Prostate gland (tissue), 2 donors: ENCODE measurements at regions of chr14 and their contacts with region 1.

Region 1: DNA sequence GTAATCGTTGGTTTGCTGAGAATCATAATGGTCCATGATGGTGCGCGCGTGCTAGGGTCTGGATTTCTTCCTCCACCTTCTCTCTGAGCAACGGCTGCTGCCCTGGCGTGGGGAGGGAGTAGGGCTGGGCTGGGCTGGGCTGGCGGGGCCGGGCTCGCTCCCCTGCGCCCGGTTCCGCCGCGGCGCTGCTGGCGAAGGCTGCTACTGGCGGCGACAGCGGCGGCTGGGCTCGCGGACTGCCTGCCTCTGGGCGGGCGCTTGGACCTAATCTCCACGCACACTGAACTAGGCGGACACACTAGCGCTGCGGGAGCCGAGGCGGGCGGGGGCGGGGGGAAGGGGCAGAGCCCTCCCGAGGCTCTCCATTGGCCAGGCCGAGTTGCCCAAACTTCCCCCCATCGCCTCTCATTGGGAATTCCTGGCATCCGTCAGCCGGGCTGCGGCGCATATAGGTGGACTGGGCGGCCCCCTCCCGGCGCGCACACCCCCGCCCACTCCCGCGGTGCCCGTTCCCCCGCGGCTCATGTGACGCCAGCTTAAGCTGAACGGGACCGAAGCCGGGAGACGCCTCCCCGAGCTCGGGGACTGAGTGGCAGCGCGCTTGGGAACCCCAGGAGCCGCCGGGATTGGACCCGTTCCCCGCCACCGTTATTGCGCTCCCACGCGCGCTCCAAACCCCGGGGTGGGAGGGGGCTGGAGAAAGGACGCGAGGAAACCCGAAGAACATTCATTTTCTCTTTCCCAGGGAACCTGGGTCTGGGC is at the start of gene ACTN1:
- DNase-seq: peak; percentile 97
- H3K4me3 ChIP-seq: peak within 1 kb of the TSS; percentile 97 to 99
- H3K27ac ChIP-seq: peak within 1 kb of the TSS; percentile 99
- H3K4me1 ChIP-seq: peaks cover 6% of the 10 kb centered on the region
- H3K27me3 ChIP-seq: no peaks in the 10 kb centered on the region
- CTCF ChIP-seq: peak in 2 of 4 experiments; percentile 1 to 36
- POLR2A ChIP-seq: peak; percentile 81
- total RNA-seq, gene ACTN1: 197 to 240 TPM

Region 2: DNA sequence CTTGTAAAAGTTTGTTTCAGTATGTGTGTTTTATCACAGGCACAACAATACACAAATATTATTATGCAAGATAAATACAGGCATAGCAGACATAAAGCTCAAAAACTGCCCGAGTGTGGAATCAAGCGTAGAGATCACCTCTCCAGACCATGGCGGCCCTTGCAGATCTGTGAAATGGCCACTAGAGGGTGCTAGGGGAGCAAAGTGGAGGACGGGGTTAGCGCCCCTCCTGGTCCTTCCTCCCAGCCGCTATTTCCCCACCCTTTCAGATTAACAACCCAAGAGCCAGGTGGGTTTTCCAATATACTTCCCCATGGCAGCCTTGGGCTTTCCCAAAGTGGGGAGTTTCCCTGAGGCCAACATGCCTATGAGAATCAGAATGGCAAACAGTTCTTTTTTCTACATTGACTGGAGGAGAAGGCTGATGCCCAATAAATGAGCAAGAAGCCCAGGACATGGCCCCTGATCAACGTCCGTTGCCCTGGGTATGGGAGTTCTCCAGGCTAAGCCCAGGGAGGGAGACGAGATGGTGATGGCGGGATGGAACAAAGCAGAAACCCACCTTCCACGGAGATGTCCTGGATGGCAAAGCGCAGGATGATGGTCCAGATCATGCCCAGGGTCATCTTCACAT is 67.5 kb before region 1 on chr14:
- intact Hi-C with region 1: loop called (anchors 5 kb)
- DNase-seq: peak; percentile 66
- H3K4me3 ChIP-seq: no peak overlapping the region
- H3K27ac ChIP-seq: peak overlapping the region; percentile 33
- H3K4me1 ChIP-seq: no peaks in the 10 kb centered on the region
- H3K27me3 ChIP-seq: no peaks in the 10 kb centered on the region
- CTCF ChIP-seq: peak; percentile 90 to 97 (median 95)
- POLR2A ChIP-seq: no peak

Region 3: DNA sequence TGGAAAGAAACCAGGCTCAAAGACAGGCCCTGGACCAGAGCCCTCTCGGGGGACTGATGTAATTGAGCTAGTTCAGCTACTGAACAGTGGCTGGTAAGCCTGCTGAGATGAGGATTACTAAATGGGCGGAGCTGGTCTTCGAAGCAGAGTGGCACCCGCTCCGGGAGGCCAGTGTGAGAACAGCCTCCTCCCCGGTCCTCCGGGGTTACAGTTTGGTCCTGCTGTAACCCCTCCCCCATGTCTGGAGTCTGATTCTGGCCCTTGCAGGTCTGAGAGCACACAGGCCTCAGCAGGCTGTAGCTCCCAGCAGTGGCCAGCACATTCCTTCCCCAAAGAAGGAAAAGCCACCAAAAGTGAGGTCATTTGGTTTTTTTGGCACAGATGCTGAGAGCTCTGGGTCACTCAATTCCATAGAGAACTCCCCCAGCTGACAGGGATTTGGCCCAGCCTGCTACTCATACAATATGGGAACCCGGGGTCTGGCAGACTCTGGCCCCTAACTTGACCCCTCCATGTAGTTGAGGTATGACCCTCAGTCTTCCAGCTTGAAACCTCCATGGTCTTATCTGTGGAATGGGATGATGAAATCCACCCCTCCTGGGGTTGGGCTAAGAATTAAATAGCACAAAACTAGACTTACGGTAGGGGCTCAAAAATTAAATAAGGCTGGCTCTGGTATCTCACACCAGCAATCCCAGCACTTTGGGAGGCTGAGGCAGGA is 39.1 kb before region 1 on chr14:
- intact Hi-C with region 1: loop called (anchors 5 kb)
- DNase-seq: peak; percentile 55
- H3K4me3 ChIP-seq: no peak overlapping the region
- H3K27ac ChIP-seq: peak overlapping the region; percentile 96 to 98
- H3K4me1 ChIP-seq: peaks cover 33% of the 10 kb centered on the region
- H3K27me3 ChIP-seq: no peaks in the 10 kb centered on the region
- CTCF ChIP-seq: no peak
- POLR2A ChIP-seq: peak; percentile 14

Region 4: DNA sequence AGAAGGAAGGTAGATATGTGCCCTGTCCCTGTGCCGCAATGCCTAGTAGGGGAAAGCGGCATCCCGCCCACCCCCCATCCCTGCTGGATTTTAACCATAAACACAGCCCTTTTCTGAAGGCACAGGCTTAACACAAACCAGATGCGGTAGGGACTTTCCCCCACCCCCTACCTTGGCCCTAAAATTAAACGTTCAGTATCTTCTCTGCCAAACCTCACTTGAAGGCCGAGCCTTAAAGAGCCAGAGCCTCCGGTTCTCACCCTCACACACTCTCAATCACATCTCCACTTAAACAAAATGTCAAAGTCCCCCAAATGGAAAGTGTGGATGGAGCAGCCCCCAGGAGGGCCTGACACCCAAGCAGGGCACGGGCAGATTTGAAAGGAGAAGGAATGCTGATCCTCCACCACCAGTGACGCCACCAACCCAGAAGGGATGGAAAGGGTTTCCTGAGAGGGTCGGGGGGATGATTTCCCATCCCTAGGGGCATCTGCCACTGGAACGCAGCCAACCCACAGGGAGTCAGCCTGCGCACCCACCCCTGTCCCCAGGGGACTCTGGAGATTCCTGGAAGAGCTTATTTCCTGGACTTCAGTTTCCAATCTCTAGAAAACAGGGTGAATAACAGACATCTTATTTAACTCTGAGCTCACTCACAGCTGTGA is 26.5 kb before region 1 on chr14:
- intact Hi-C with region 1: loop called (anchors 2 kb)
- DNase-seq: no peak
- H3K4me3 ChIP-seq: peak overlapping the region in 1 of 2 donors; percentile 5
- H3K27ac ChIP-seq: peak overlapping the region; percentile 79 to 98
- H3K4me1 ChIP-seq: peaks cover 9% of the 10 kb centered on the region
- H3K27me3 ChIP-seq: no peaks in the 10 kb centered on the region
- CTCF ChIP-seq: no peak
- POLR2A ChIP-seq: no peak

Region 5: DNA sequence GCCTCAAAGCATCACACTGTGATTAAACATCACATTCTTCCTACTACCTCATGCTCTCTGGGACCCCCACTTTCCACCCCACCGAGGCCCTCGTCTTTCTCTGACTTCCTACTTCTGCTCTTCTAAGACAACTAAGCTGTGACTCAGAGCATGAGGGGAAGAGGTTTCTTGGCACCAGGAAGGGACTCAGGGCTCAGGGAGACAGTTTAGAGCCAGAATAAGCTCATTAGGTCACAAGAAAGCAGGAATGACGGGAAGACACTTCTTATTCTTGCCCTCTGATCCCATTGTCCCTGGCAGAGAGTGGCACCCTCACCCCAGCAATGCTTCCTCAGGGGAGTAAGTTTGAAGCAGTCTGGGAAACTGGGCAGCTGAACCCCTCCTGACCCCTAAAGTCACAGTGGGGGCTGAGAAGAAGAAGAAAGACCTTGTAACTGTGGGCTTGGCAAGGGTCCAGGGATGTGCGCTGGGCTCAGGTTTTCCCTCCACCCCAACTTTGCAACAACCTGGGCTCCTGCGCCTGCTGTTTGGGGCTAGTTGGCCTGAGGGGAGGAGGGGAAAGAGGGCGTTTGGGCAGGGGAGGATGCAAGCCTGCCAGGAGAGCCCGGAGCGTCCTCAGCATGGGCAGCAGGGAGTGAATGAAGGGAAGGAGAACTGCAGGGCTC is 64.5 kb after region 1 on chr14:
- intact Hi-C with region 1: loop called (anchors 5 kb)
- DNase-seq: no peak
- H3K4me3 ChIP-seq: no peak overlapping the region
- H3K27ac ChIP-seq: peak overlapping the region; percentile 18 to 38
- H3K4me1 ChIP-seq: no peaks in the 10 kb centered on the region
- H3K27me3 ChIP-seq: no peaks in the 10 kb centered on the region
- CTCF ChIP-seq: no peak
- POLR2A ChIP-seq: no peak

Region 6: GRCh38 chr14:69055999-69056788 is 77.0 kb after region 1 on chr14:
- intact Hi-C with region 1: loop called (anchors 5 kb)
- DNase-seq: no peak
- H3K4me3 ChIP-seq: no peak overlapping the region
- H3K27ac ChIP-seq: no peak overlapping the region
- H3K4me1 ChIP-seq: no peaks in the 10 kb centered on the region
- H3K27me3 ChIP-seq: no peaks in the 10 kb centered on the region
- CTCF ChIP-seq: peak in 1 of 4 experiments; percentile 23
- POLR2A ChIP-seq: no peak

Region 7: DNA sequence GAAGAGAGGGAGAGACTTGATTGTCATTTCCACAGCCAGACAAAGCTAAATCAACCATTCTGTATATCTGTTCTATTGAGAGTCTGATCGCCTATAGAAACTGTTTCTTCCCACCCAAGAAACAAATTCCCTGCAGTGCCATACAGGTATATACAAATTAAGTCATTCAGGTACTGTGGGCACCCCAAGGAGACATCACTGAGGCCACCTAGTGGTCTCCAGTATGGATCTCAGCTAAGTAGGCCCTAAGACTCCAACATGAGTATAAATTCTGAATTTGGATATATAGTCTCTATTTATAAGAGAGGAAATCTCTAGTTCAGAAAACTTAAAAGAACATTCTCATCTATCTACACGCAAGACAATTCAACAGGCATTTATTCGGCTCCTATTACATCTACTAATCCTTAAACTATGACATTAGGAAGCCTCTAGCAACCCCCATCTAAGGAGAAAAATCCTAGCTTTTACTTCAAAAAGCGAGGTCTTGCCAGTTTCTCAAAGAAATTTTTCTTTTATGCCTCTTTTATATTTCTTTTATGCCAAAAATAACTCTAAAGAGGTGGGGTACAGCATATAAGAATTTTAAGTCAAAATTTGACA is 111.1 kb after region 1 on chr14:
- intact Hi-C with region 1: loop called (anchors 5 kb)
- DNase-seq: peak; percentile 51
- H3K4me3 ChIP-seq: no peak overlapping the region
- H3K27ac ChIP-seq: peak overlapping the region; percentile 81 to 87
- H3K4me1 ChIP-seq: peaks cover 4% of the 10 kb centered on the region
- H3K27me3 ChIP-seq: no peaks in the 10 kb centered on the region
- CTCF ChIP-seq: peak; percentile 39 to 71 (median 62)
- POLR2A ChIP-seq: no peak

Region 8: GRCh38 chr14:69772082-69773017 is 793.1 kb after region 1 on chr14:
- intact Hi-C with region 1: no loop called
- DNase-seq: no peak
- H3K4me3 ChIP-seq: no peak overlapping the region
- H3K27ac ChIP-seq: no peak overlapping the region
- H3K4me1 ChIP-seq: no peaks in the 10 kb centered on the region
- H3K27me3 ChIP-seq: no peaks in the 10 kb centered on the region
- CTCF ChIP-seq: no peak
- POLR2A ChIP-seq: no peak